A673 (cell line): ENCODE measurements at regions of chr16 and their contacts with region 1.

Region 1: DNA sequence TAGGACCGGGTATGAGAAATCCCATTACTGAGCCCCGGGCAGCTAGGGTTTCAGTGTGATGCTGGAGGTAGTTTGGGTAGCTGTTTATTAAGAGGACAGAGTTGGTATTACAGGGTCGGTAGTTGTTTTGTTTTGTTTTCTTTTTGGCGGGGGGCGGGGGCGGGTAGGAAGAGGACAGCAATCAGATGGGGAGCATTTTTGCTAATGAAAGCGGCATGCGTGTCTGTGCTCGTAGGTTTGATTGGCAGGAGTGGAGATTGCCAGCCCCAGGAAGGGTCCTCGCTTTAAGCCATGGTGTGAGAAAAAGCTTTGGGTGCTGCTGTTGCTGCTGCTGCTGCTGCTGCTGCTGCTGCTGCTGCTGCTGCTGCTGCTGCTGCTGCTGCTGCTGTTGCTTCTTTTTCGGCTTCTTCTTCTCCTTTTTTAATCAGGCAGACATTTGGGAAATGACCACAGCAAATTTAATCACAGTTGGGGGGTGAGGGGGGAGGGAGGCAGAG is 498.5 kb upstream of the ZFHX3 start:
- DNase-seq: no peak
- H3K4me3 ChIP-seq: no peak overlapping the region
- H3K27ac ChIP-seq: no peak overlapping the region
- H3K4me1 ChIP-seq: no peaks in the 10 kb centered on the region
- H3K27me3 ChIP-seq: peaks cover 93% of the 10 kb centered on the region
- CTCF ChIP-seq: no peak

Region 2: GRCh38 chr16:72093448-72094265 is 1452.7 kb before region 1 on chr16 and contains the starts of genes DHX38 and TXNL4B:
- CTCF ChIA-PET with region 1: no interaction called
- POLR2A ChIA-PET with region 1: interaction called, 12 read pairs
- intact Hi-C with region 1: no loop called
- DNase-seq: peak; percentile 99
- H3K4me3 ChIP-seq: peak within 1 kb of the TSS; percentile 70
- H3K27ac ChIP-seq: peak within 1 kb of the TSS; percentile 89
- H3K4me1 ChIP-seq: peaks cover 8% of the 10 kb centered on the region
- H3K27me3 ChIP-seq: no peaks in the 10 kb centered on the region
- CTCF ChIP-seq: no peak
- total RNA-seq, gene DHX38: 77.7 and 91.0 TPM in 2 replicates
- total RNA-seq, gene TXNL4B: 15.8 and 17.6 TPM in 2 replicates

Region 3: DNA sequence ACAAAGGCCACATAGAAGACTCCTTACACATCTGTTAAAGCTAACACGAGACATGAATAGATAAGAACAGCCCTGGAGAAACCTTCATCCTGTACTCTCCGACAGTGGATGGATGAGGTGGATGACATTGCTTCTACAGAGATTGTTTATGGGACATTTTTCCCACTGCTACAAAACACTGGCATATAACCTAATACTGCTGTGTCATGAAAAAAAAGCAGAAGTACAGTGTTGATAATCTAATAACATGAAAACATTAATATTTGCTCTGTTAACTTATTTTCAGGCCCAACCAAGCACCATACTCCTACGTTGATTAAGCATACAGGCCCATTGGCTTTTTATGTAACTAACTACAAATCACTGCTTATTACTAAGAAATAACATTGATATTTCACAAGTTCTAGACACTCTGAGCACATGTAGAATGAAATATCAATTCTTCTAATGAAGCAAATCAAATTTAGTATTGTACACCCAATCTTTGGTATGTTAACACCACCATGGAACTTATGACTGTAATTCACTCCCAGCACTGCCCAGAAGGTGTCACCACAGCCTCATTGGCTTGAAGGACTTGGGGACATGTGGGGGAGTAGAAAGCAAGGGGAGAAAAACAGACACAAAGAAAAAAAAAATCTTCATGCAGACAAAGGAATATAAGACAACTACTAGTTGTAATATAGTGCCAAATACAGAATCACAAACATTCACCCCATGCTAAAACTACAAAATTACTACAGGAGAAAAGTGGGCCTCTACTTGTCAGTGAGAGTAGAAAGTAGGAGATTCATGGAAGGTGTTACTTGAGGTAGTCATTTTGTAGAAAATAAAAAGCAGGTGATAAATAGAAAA is 1044.4 kb before region 1 on chr16:
- CTCF ChIA-PET with region 1: no interaction called
- POLR2A ChIA-PET with region 1: no interaction called
- intact Hi-C with region 1: loop called (anchors 10 kb)
- DNase-seq: peak; percentile 79
- H3K4me3 ChIP-seq: no peak overlapping the region
- H3K27ac ChIP-seq: no peak overlapping the region
- H3K4me1 ChIP-seq: no peaks in the 10 kb centered on the region
- H3K27me3 ChIP-seq: no peaks in the 10 kb centered on the region
- CTCF ChIP-seq: peak; percentile 89

Region 4: DNA sequence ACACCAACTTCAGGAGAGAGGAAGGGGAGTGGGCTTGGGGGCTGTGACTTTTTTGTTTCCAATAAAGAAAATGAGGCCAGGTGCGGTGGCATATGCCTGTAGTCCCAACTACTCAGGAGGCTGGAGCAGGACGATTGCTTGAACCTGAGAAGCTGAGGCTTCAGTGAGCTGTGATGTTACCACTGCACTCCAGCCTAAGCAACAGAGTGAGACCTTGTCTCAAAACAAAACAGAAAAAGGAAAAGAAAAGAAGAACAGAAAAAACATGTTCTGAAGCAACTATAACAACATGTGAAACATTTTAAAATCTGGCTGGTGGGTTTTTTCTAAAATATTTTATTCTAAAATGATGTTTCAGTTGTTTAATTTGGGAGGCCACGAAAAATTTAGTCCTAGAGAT is 55.5 kb after region 1 on chr16:
- CTCF ChIA-PET with region 1: no interaction called
- POLR2A ChIA-PET with region 1: no interaction called
- intact Hi-C with region 1: no loop called
- DNase-seq: no peak
- H3K4me3 ChIP-seq: no peak overlapping the region
- H3K27ac ChIP-seq: no peak overlapping the region
- H3K4me1 ChIP-seq: no peaks in the 10 kb centered on the region
- H3K27me3 ChIP-seq: no peaks in the 10 kb centered on the region
- CTCF ChIP-seq: no peak